ENCODE measurements at regions of chr17 and their contacts with region 1.

Region 1: GRCh38 chr17:44438636-44439035 is 49.2 kb upstream of the ITGA2B start:
- DNase-seq: peak; percentile 34 to 41
- ATAC-seq: peak; percentile 93 to 97 (median 97)
- H3K4me3 ChIP-seq: no peak overlapping the region
- H3K4me3 Mint-ChIP-seq: peak overlapping the region; percentile 86
- H3K27ac ChIP-seq: peak overlapping the region; percentile 74
- H3K27ac Mint-ChIP-seq: peak overlapping the region; percentile 93 to 95
- H3K4me1 ChIP-seq: peaks cover 31% of the 10 kb centered on the region
- H3K4me1 Mint-ChIP-seq: peaks cover 48 to 53% of the 10 kb centered on the region in 2 donors
- H3K27me3 ChIP-seq: no peaks in the 10 kb centered on the region
- H3K27me3 Mint-ChIP-seq: no peaks in the 10 kb centered on the region
- CTCF ChIP-seq: no peak

Region 2: GRCh38 chr17:44400226-44400847 is 38.3 kb before region 1 on chr17:
- intact Hi-C with region 1: loop called (anchors 5 kb)
- DNase-seq: no peak
- ATAC-seq: peak; percentile 50 to 77 (median 74)
- H3K4me3 ChIP-seq: no peak overlapping the region
- H3K4me3 Mint-ChIP-seq: no peak overlapping the region
- H3K27ac ChIP-seq: peak overlapping the region; percentile 26
- H3K27ac Mint-ChIP-seq: peak overlapping the region; percentile 76 to 79
- H3K4me1 ChIP-seq: no peaks in the 10 kb centered on the region
- H3K4me1 Mint-ChIP-seq: peaks cover 11 to 13% of the 10 kb centered on the region in 2 donors
- H3K27me3 ChIP-seq: no peaks in the 10 kb centered on the region
- H3K27me3 Mint-ChIP-seq: no peaks in the 10 kb centered on the region
- CTCF ChIP-seq: peak; percentile 60

Region 3: DNA sequence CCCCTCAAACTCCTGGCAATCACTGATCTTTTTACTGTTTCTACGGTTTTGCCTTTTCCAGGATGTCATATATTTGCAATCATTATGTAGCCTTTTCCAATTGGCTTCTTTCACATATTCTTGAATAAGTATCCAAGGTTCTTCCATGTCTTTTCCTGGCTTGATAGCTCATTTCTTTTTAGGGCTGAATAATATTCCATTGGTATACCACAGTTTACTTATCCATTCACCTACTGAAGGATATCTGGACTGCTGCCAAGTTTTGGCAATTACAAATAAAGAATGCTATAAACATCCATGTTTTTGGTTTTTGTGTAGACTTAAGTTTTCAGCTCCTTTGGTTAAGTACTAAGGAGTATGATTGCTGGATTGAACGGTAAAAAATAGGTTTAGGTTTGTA is 48.5 kb after region 1 on chr17:
- intact Hi-C with region 1: loop called (anchors 5 kb)
- DNase-seq: peak in 1 of 2 donors; percentile 19
- ATAC-seq: no peak
- H3K4me3 ChIP-seq: no peak overlapping the region
- H3K4me3 Mint-ChIP-seq: no peak overlapping the region
- H3K27ac ChIP-seq: no peak overlapping the region
- H3K27ac Mint-ChIP-seq: peak overlapping the region; percentile 20 to 67
- H3K4me1 ChIP-seq: peaks cover 7% of the 10 kb centered on the region
- H3K4me1 Mint-ChIP-seq: peaks cover 38 to 48% of the 10 kb centered on the region in 2 donors
- H3K27me3 ChIP-seq: no peaks in the 10 kb centered on the region
- H3K27me3 Mint-ChIP-seq: no peaks in the 10 kb centered on the region
- CTCF ChIP-seq: no peak

Region 4: GRCh38 chr17:44503147-44504029 is 64.8 kb after region 1 on chr17 and contains the start of gene GPATCH8:
- intact Hi-C with region 1: loop called (anchors 5 kb)
- DNase-seq: peak; percentile 91 to 96
- ATAC-seq: peak; percentile 88 to 94 (median 91)
- H3K4me3 ChIP-seq: peak within 1 kb of the TSS; percentile 98
- H3K4me3 Mint-ChIP-seq: peak within 1 kb of the TSS; percentile 97
- H3K27ac ChIP-seq: peak within 1 kb of the TSS; percentile 82
- H3K27ac Mint-ChIP-seq: peak within 1 kb of the TSS; percentile 94 to 99
- H3K4me1 ChIP-seq: peaks cover 13% of the 10 kb centered on the region
- H3K4me1 Mint-ChIP-seq: peaks cover 40 to 41% of the 10 kb centered on the region in 2 donors
- H3K27me3 ChIP-seq: no peaks in the 10 kb centered on the region
- H3K27me3 Mint-ChIP-seq: no peaks in the 10 kb centered on the region
- CTCF ChIP-seq: no peak
- total RNA-seq, gene GPATCH8: 104 to 111 (median 109) TPM